ENCODE measurements at regions of chr9 and their contacts with region 1.

Region 1: GRCh38 chr9:130866474-130866965 is 30.1 kb downstream of the QRFP start:
- DNase-seq: peak; percentile 92
- ATAC-seq: peak; percentile 96
- H3K4me3 ChIP-seq: no peak overlapping the region
- H3K27ac ChIP-seq: no peak overlapping the region
- H3K4me1 ChIP-seq: no peaks in the 10 kb centered on the region
- H3K27me3 ChIP-seq: no peaks in the 10 kb centered on the region
- CTCF ChIP-seq: peak; percentile 98 to 99 (median 99)
- POLR2A ChIP-seq: no peak
- RAD21 ChIP-seq: peak; percentile 87

Region 2: DNA sequence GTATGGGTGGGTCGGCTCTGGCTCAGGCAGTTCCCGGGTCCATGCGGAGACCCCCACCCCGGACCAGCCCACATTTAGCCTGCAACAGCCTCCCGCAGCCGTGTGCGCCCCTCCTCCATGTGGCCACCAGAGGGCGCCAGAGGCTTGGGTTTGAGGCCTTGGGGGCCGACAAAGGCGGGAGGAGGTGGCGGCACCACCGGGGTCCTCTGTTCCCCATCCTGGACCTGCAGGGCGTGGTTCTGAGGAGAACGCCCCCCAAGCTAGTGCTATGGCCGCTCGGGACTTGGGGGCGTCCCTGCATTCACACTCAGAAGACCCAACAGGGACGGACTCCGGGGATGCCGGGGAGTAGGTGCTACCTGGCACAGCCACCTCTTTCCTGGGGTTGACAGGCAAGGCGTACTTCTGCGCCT is 405.3 kb before region 1 on chr9:
- CTCF ChIA-PET with region 1: no interaction called
- POLR2A ChIA-PET with region 1: no interaction called
- RAD21 ChIA-PET with region 1: no interaction called
- intact Hi-C with region 1: loop called (anchors 5 kb)
- DNase-seq: no peak
- ATAC-seq: peak; percentile 87
- H3K4me3 ChIP-seq: no peak overlapping the region
- H3K27ac ChIP-seq: no peak overlapping the region
- H3K4me1 ChIP-seq: no peaks in the 10 kb centered on the region
- H3K27me3 ChIP-seq: no peaks in the 10 kb centered on the region
- CTCF ChIP-seq: peak; percentile 83 to 89 (median 88)
- POLR2A ChIP-seq: no peak
- RAD21 ChIP-seq: peak; percentile 96

Region 3: GRCh38 chr9:130707225-130707976 is 159.1 kb before region 1 on chr9:
- CTCF ChIA-PET with region 1: interaction called, 37 read pairs
- POLR2A ChIA-PET with region 1: no interaction called
- RAD21 ChIA-PET with region 1: no interaction called
- intact Hi-C with region 1: loop called (anchors 1 kb)
- DNase-seq: no peak
- ATAC-seq: peak; percentile 72
- H3K4me3 ChIP-seq: no peak overlapping the region
- H3K27ac ChIP-seq: no peak overlapping the region
- H3K4me1 ChIP-seq: peaks cover 0 to 12% of the 10 kb centered on the region in 2 experiments; a peak in 1 of 4 replicates
- H3K27me3 ChIP-seq: no peaks in the 10 kb centered on the region
- CTCF ChIP-seq: peak; percentile 60 to 87 (median 83)
- POLR2A ChIP-seq: no peak
- RAD21 ChIP-seq: peak; percentile 84

Region 4: GRCh38 chr9:130741831-130742449 is 124.6 kb before region 1 on chr9:
- CTCF ChIA-PET with region 1: no interaction called
- POLR2A ChIA-PET with region 1: no interaction called
- RAD21 ChIA-PET with region 1: no interaction called
- intact Hi-C with region 1: no loop called
- DNase-seq: no peak
- ATAC-seq: peak; percentile 77
- H3K4me3 ChIP-seq: no peak overlapping the region
- H3K27ac ChIP-seq: no peak overlapping the region
- H3K4me1 ChIP-seq: peaks cover 17 to 29% of the 10 kb centered on the region in 2 experiments
- H3K27me3 ChIP-seq: no peaks in the 10 kb centered on the region
- CTCF ChIP-seq: no peak
- POLR2A ChIP-seq: no peak
- RAD21 ChIP-seq: no peak

Region 5: GRCh38 chr9:130770679-130771442 is 95.7 kb before region 1 on chr9:
- CTCF ChIA-PET with region 1: interaction called, 9 read pairs
- POLR2A ChIA-PET with region 1: no interaction called
- RAD21 ChIA-PET with region 1: no interaction called
- intact Hi-C with region 1: loop called (anchors 1 kb)
- DNase-seq: peak; percentile 43
- ATAC-seq: peak; percentile 98
- H3K4me3 ChIP-seq: no peak overlapping the region
- H3K27ac ChIP-seq: no peak overlapping the region
- H3K4me1 ChIP-seq: no peaks in the 10 kb centered on the region
- H3K27me3 ChIP-seq: no peaks in the 10 kb centered on the region
- CTCF ChIP-seq: peak; percentile 49 to 76 (median 70); a peak in 5 of 6 replicates
- POLR2A ChIP-seq: no peak
- RAD21 ChIP-seq: peak; percentile 77

Region 6: GRCh38 chr9:130785940-130786508 is 80.5 kb before region 1 on chr9:
- CTCF ChIA-PET with region 1: no interaction called
- POLR2A ChIA-PET with region 1: no interaction called
- RAD21 ChIA-PET with region 1: no interaction called
- intact Hi-C with region 1: no loop called
- DNase-seq: no peak
- ATAC-seq: no peak
- H3K4me3 ChIP-seq: no peak overlapping the region
- H3K27ac ChIP-seq: no peak overlapping the region
- H3K4me1 ChIP-seq: no peaks in the 10 kb centered on the region; a peak in 1 of 4 replicates
- H3K27me3 ChIP-seq: no peaks in the 10 kb centered on the region
- CTCF ChIP-seq: no peak
- POLR2A ChIP-seq: no peak
- RAD21 ChIP-seq: no peak

Region 7: DNA sequence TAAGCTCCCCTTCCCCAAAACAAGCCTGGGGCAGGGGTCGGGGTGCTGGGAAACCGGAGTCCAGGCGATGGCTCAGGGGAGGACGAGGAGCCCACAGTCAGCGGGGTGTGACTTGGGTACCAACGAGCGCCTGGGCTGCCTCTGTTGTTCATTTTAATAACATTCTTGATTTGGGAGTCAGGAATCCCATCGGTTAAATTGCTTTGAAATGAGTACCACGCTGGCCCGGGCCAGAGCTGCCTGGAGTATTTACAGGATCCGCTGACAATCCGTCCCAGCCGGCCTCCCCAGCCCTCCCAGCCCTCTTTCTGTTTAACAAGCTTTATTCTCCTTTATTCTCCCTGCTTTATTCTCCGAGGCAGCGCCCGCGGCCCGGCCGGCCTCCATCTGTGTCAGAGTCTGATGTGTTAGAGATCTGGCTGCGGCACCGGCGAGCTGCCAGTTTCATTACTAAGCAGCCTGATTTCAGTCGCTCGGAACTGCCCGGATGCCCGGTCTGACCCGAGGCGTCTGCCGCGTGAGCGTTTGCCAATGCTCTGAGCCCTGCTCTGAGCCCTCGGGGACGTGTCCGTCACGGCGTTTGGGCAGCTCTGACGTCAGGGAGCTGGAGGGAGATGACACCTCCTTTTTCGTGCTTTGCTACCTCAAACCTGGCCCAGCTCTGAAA is 46.5 kb after region 1 on chr9:
- CTCF ChIA-PET with region 1: no interaction called
- POLR2A ChIA-PET with region 1: no interaction called
- RAD21 ChIA-PET with region 1: no interaction called
- intact Hi-C with region 1: no loop called
- DNase-seq: no peak
- ATAC-seq: no peak
- H3K4me3 ChIP-seq: no peak overlapping the region
- H3K27ac ChIP-seq: no peak overlapping the region
- H3K4me1 ChIP-seq: no peaks in the 10 kb centered on the region
- H3K27me3 ChIP-seq: no peaks in the 10 kb centered on the region
- CTCF ChIP-seq: no peak
- POLR2A ChIP-seq: no peak
- RAD21 ChIP-seq: no peak

Region 8: DNA sequence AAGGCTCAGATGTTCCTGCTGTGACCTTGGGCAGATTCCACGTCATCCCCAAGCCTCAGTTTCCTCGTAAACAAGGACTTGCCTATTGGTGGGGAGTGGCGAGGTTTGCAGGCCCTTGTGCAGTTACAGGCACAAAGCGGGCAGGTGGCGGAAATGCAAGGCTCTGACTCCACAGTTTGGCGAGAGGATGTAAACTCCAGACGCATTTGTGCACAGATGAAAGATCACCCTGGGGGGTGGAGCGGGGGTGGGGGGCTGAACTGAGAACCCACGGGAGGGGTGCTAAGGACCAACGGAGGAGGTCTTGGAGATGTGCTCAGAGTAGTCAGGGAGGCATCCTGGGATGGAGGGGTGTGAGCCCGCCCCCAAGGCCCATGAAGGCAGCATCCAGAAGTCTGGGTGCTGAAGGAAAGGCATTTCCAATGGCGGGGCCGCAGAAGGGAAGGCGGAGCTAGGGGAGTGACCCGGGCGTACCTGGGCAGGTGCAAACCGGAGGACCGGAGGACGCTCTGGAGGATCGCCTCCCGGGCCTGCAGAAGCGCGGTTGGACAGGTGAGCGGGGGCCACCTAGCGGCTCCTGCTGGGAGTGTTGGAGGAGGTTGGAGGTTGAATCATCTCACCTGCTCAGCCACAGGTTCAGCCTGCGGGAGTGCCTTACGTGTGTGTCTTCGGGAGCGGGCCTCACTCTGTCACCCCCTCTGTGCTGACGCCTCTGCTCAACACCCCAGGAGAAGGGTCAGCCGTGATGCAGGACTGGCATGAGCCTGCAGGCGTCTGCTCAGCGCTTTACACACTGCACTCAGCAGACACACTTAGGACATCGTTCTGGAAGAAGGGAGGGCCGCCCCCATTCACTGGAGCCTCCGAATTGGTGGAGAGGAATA is 74.4 kb after region 1 on chr9:
- CTCF ChIA-PET with region 1: interaction called, 13 read pairs
- POLR2A ChIA-PET with region 1: no interaction called
- RAD21 ChIA-PET with region 1: interaction called in 1 of 2 experiments, 3 read pairs
- intact Hi-C with region 1: loop called (anchors 1 kb)
- DNase-seq: peak; percentile 75
- ATAC-seq: peak; percentile 77
- H3K4me3 ChIP-seq: peak overlapping the region in 1 of 2 experiments; percentile 34; a peak in 3 of 4 replicates
- H3K27ac ChIP-seq: no peak overlapping the region
- H3K4me1 ChIP-seq: peaks cover 21 to 45% of the 10 kb centered on the region in 2 experiments
- H3K27me3 ChIP-seq: no peaks in the 10 kb centered on the region
- CTCF ChIP-seq: peak in 2 of 3 experiments; percentile 86 to 93; a peak in 4 of 6 replicates
- POLR2A ChIP-seq: no peak
- RAD21 ChIP-seq: no peak

Region 9: DNA sequence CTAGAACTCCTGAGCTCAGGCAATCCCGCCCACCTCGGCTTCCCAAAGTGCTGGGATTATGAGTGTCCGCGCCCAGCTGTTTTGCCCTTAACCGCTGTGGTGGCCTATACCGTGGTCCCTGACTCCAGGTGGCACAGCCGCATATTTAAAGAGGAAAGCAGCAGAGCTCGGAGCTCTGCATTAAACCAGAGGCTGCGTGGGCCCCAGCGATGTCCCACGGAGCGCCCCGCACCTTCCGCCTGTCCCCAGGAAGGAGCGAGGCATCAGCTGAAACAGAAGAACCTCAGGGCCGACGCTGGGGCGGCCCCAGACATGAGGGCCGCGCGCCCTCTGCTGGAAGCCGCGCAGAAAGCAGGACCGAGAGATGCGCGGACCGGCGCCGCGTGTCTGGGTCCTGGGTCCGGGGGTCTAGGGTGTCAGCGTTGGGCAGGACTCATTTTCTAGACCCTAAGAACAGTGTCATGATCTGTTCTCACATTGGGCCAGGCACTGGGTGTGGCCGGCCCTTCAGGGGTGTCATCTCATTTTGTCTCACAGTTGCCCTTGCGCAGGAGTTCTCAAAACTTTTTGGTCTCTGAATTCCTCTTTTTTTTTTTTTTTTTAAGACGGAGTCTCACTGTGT is 180.2 kb after region 1 on chr9:
- CTCF ChIA-PET with region 1: interaction called, 36 read pairs
- POLR2A ChIA-PET with region 1: no interaction called
- RAD21 ChIA-PET with region 1: interaction called, 5 to 8 read pairs
- intact Hi-C with region 1: loop called (anchors 1 kb)
- DNase-seq: peak; percentile 37
- ATAC-seq: peak; percentile 89
- H3K4me3 ChIP-seq: peak overlapping the region; percentile 26 to 45
- H3K27ac ChIP-seq: 0 out of 2 replicates have a peak overlapping the region, but pooled peaks have one; percentile 27
- H3K4me1 ChIP-seq: peaks cover 12 to 22% of the 10 kb centered on the region in 2 experiments; a peak in 3 of 4 replicates
- H3K27me3 ChIP-seq: no peaks in the 10 kb centered on the region
- CTCF ChIP-seq: peak; percentile 91 to 93 (median 92)
- POLR2A ChIP-seq: no peak
- RAD21 ChIP-seq: peak; percentile 97

Measured in HCT116 (cell line).